ENCODE measurements at regions of chr7 and their contacts with region 1.

Region 1: DNA sequence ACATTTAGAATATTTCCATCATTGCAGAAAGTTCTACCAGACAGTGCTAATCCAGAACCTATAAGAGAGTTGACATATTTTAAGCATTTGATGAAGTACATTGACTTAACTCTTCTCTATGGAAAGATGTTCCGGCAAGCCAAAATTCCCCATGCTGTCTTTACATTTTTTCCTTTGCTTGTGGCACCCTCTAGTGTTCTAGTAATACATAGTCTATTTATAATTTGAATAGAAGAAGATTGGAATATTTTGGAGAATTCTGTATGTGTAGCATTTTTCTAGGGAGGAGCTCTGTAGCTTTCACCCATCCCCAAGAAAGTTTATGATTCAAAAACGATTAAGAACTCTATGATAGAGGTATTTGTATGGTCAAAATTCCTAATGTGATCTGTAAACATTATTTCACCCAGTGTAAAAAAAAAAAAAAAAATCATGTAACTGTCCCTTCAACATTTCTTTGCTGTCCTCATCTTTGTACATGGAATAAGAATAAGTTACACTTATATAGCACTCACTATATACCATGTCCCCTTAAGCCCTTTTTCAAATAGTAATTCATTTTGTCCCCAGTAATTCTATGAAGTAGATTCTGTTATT is 33.2 kb downstream of the NRF1 start:
- DNase-seq: no peak
- H3K4me3 ChIP-seq: no peak overlapping the region
- H3K27ac ChIP-seq: no peak overlapping the region
- H3K4me1 ChIP-seq: no peaks in the 10 kb centered on the region
- H3K27me3 ChIP-seq: no peaks in the 10 kb centered on the region
- CTCF ChIP-seq: peak in 2 of 4 experiments; percentile 49 to 53
- POLR2A ChIP-seq: no peak

Region 2: GRCh38 chr7:129367700-129368388 is 276.9 kb before region 1 on chr7:
- intact Hi-C with region 1: loop called (anchors 10 kb)
- DNase-seq: peak; percentile 65
- H3K4me3 ChIP-seq: no peak overlapping the region
- H3K27ac ChIP-seq: no peak overlapping the region
- H3K4me1 ChIP-seq: no peaks in the 10 kb centered on the region
- H3K27me3 ChIP-seq: no peaks in the 10 kb centered on the region
- CTCF ChIP-seq: peak; percentile 37 to 81 (median 76)
- POLR2A ChIP-seq: peak; percentile 59

Region 3: GRCh38 chr7:129489491-129489890 is 155.2 kb before region 1 on chr7:
- intact Hi-C with region 1: loop called (anchors 10 kb)
- DNase-seq: no peak
- H3K4me3 ChIP-seq: no peak overlapping the region
- H3K27ac ChIP-seq: no peak overlapping the region
- H3K4me1 ChIP-seq: no peaks in the 10 kb centered on the region
- H3K27me3 ChIP-seq: no peaks in the 10 kb centered on the region
- CTCF ChIP-seq: no peak
- POLR2A ChIP-seq: no peak

Region 4: GRCh38 chr7:129664029-129665012 is 19.6 kb after region 1 on chr7:
- intact Hi-C with region 1: no loop called
- DNase-seq: no peak
- H3K4me3 ChIP-seq: no peak overlapping the region
- H3K27ac ChIP-seq: no peak overlapping the region
- H3K4me1 ChIP-seq: no peaks in the 10 kb centered on the region
- H3K27me3 ChIP-seq: no peaks in the 10 kb centered on the region
- CTCF ChIP-seq: peak; percentile 11 to 72 (median 53)
- POLR2A ChIP-seq: no peak

Region 5: DNA sequence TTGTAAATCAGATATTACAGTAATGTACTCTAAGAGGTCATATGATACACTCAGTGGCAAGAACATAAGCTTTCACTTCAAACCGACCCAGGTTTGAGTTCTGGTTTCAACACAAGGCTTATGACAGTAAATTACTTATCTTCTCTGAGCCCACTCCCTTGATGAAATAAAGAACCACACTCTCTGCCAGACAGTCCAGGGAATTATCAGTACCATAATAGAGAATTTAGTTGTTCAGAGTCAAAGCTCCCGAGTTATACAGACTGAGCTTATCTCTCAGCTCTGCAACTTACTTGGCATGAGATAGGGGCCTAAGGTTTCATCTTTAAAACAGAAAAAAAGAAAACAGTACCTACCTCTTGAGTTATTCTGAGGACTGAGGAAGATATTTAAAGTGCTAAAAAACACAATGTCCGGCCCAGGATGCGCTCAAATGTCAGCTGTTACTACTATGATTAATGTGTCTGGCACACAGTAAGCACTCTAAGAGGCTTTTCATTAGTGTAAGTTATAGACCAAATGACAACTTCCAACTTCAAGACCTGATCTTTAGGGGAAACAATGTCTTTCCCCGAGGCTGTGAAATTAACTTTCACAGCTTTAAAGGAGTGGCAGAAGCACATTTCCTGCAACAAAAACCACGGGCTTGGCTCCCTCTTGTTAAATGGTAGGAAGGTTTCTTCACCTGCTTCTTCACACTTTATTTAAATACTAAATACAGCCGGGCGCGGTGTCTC is 270.0 kb after region 1 on chr7:
- intact Hi-C with region 1: no loop called
- DNase-seq: no peak
- H3K4me3 ChIP-seq: no peak overlapping the region
- H3K27ac ChIP-seq: no peak overlapping the region
- H3K4me1 ChIP-seq: peaks cover 26% of the 10 kb centered on the region
- H3K27me3 ChIP-seq: no peaks in the 10 kb centered on the region
- CTCF ChIP-seq: no peak
- POLR2A ChIP-seq: no peak

Region 6: DNA sequence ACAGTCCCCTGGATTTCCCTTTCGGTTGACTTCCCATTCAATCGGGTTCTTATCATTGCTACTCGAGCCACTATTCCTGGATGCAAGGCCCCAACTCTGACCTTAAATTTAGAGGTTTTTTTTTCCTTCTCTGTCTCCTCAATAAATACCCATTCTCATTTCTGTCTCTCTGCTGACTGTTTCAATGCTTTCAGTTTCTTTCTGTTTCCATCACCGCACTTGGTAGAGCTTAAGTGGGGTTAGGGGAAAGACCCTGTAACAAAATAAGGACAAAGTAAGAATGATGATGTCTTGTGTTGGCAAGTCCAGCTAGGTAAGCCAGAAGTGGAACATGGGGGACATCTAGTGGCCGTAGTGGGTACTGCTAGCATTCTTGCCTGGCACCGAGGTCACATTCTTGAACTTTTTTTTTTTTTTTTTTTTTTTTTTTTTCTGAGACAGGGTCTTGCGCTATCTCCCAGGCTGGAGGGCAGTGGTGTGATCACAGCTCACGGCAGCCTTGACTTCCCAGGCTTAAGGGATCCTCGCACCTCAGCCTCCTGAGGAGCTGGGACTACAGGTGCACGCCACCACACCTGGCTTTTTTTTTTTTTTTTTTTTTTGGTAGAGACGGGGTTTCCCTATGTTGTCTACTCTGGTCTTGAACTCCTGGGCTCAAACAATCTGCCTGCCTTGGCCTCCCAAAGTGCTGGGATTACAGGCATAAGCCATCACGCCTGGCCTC is 366.1 kb after region 1 on chr7:
- intact Hi-C with region 1: loop called (anchors 10 kb)
- DNase-seq: peak; percentile 77
- H3K4me3 ChIP-seq: no peak overlapping the region
- H3K27ac ChIP-seq: no peak overlapping the region
- H3K4me1 ChIP-seq: no peaks in the 10 kb centered on the region
- H3K27me3 ChIP-seq: no peaks in the 10 kb centered on the region
- CTCF ChIP-seq: peak; percentile 76 to 91 (median 84)
- POLR2A ChIP-seq: no peak

Measured in prostate gland (tissue), 2 donors.